ENCODE measurements at regions of chr5 and their contacts with region 1.

Region 1: DNA sequence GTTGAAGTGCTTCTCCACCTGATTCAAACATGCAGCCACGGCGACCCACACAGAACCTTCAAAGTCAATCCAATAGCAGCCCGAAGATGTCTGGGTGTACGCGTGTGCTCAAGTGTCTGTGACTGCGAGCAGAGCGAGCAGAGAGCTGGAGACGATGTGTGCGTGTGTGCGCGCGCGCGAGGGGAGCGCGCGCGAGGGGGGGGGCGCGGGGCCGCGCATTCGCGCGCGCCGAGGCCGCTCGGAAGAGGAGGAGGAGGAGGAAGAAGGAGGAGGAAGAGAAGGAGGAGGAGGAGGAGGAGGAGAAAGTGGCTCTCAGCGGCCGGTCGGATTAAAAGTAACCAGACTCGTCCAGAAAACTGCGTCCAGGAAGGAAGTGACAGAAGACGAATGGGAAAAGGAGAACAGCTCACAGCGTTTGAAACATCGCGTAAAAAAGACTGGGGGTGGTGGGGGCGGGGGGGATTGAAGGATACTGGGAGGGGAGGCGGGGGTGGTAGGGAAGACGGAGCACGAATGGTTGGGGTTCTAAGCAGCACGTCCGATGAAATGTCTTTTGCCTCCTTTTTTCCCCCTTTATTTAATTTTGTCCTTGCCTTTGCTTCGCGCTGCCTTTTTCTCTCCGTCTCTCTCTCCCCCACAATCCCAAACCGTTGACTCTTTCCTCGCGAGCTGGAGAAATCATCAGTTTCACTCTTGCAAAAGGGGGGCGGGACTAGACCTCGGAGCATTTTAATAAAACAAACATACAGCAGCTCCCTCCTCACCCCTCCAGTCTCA is at the start of gene MEF2C:
- DNase-seq: no peak
- H3K4me3 Mint-ChIP-seq: peak within 1 kb of the TSS; percentile 87
- H3K27ac Mint-ChIP-seq: no peak within 1 kb of the TSS
- H3K4me1 Mint-ChIP-seq: peaks cover 21% of the 10 kb centered on the region
- H3K27me3 Mint-ChIP-seq: peaks cover 59% of the 10 kb centered on the region
- total RNA-seq, gene MEF2C: 0.44 and 0.47 TPM in 2 replicates

Region 2: DNA sequence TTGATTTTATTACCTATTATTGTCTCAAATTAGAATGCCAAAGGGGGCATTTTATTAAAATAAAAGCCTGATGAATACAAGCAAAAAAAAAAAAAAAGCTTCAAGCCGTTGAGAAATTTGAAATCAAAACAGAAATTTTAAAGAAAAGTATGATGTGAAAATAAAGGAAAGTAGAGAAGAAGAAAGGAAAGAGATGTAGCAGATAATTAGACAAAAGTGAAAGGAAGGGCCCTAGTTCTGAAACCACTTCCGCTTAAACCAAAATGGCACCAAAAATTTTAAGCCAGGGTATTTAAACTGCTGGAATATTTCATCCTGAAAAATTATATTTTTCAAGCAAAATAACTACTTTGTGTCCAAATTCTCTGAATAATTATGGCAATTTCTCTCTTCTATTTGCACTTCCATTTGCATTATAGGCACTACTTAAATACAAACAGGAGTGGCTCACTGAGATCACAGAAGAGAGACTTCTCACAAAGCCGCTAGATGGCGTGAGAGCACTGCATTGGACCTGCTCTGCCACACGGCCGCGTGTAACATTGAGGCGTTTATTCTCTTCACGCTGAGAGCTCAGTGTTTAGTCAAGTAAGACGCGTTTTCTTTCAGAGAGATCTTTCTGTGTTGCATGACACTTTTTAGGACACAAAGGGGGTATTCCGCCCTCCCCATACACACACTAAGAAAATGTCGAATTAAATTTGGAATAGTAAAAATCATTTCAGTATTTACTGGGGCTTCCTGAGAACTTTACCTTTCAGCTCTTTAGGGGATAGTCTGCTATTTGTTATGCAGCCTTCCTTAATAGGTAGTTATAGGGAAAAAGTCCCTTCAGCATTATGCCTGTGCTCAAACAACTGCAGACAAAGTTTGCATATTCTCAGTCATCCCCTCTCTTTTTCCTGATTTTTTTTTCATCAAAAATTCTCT is 1102.2 kb before region 1 on chr5:
- intact Hi-C with region 1: loop called (anchors 5 kb)
- DNase-seq: peak; percentile 64
- H3K4me3 Mint-ChIP-seq: no peak overlapping the region
- H3K27ac Mint-ChIP-seq: no peak overlapping the region
- H3K4me1 Mint-ChIP-seq: no peaks in the 10 kb centered on the region
- H3K27me3 Mint-ChIP-seq: peaks cover 10% of the 10 kb centered on the region

Region 3: GRCh38 chr5:87807783-87808182 is 1075.5 kb before region 1 on chr5:
- intact Hi-C with region 1: no loop called
- DNase-seq: no peak
- H3K4me3 Mint-ChIP-seq: no peak overlapping the region
- H3K27ac Mint-ChIP-seq: no peak overlapping the region
- H3K4me1 Mint-ChIP-seq: no peaks in the 10 kb centered on the region
- H3K27me3 Mint-ChIP-seq: no peaks in the 10 kb centered on the region

Region 4: DNA sequence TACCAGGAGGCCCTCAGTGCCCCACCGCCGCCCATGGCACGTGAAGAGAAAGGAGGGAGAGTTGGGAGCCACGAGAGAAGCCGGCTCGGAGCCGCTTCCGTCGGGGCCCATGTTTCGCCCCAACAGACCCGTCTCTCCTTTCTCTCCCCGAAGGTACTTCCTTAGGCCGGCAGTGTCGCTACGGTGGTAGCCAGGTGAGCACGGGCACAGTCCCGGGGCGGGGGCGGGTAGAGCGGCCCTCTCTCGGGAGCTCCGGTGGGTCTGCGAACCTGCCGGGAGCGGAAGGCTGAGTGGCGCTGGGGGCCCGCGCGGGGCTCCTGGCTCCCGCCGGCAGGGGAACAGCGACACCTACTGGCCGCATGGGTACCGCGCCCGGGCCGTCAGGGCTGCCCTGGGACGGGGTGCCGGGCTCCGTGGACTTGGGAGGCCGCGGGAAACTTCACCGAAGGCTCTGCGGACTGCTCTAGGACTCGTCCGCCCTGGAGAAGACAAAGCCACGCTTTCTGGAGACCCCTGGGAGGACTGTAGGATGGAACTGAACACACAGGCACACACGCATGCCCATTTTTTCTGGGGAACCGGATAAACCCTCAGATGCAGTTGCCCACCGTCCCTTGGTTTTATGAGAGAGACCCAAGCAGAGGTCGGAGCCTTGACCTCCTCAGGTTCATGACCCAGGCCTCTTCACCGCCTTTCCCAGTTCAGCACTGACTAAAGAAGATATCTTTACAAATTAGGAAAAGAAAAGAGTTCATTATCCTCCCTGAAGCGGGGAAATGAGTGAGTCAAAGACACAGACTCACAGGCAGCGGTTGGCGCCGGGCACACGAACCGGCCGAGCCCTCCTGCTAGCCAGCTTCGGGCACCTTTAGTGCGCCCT is 202.8 kb before region 1 on chr5:
- intact Hi-C with region 1: loop called (anchors 5 kb)
- DNase-seq: peak; percentile 71
- H3K4me3 Mint-ChIP-seq: peak overlapping the region; percentile 26
- H3K27ac Mint-ChIP-seq: no peak overlapping the region
- H3K4me1 Mint-ChIP-seq: peaks cover 31% of the 10 kb centered on the region
- H3K27me3 Mint-ChIP-seq: peaks cover 81% of the 10 kb centered on the region

Region 5: DNA sequence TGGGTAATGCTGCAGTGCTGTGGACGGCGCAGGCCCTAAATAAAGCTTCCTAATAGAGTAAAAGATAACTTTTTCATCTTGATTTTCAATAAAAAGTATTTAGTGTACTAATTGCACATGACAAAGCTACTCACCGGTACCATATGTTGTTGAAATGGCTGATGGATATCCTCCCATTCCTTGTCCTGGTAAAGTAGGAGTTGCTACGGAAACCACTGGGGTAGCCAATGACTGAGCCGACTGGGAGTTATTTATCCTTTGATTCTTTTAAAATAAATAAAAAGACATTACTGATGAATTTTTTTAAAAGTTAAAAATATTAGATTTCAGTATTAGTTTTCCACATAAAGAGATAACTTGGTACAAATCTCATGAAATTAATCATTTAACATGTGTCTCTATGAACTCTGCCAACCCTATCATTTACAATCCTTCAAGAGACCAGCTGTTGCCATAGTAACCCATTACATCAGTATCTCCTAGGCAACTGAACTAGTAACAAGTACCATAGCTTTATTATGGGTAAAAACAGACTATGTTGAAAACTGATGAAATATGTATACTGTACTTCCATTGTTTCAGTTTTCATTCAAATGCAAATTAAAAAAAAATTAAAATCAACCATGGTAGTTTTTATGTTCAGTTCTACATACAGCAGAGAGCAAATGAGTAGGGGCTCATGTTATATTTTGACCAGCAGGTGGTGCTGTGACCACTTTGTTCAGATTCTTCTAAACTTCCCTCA is 154.0 kb before region 1 on chr5:
- intact Hi-C with region 1: loop called (anchors 2 kb)
- DNase-seq: peak; percentile 14
- H3K4me3 Mint-ChIP-seq: no peak overlapping the region
- H3K27ac Mint-ChIP-seq: no peak overlapping the region
- H3K4me1 Mint-ChIP-seq: peaks cover 4% of the 10 kb centered on the region
- H3K27me3 Mint-ChIP-seq: peaks cover 9% of the 10 kb centered on the region

Region 6: DNA sequence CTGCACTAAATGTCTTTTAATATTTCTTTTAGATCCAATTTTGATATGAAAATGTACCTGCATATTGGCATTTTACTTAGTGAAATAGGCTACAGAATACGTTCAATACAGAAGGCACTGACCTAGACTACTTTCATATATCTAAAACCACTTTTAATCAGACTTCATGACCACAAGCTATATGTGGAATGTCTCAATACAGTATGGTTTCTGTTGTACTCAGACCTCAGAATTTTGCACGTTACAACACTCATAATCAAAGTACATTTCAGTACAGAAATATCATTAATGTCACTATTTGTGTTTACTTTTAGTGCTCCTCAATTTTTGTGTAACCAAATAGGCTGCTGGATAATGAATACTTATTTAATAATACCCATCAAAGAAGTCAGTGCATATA is 75.1 kb before region 1 on chr5:
- intact Hi-C with region 1: no loop called
- DNase-seq: no peak
- H3K4me3 Mint-ChIP-seq: no peak overlapping the region
- H3K27ac Mint-ChIP-seq: no peak overlapping the region
- H3K4me1 Mint-ChIP-seq: no peaks in the 10 kb centered on the region
- H3K27me3 Mint-ChIP-seq: peaks cover 2% of the 10 kb centered on the region

Region 7: GRCh38 chr5:90558344-90559192 is 1675.3 kb after region 1 on chr5 and contains the start of gene ADGRV1:
- intact Hi-C with region 1: loop called (anchors 10 kb)
- DNase-seq: no peak
- H3K4me3 Mint-ChIP-seq: peak within 1 kb of the TSS; percentile 34
- H3K27ac Mint-ChIP-seq: no peak within 1 kb of the TSS
- H3K4me1 Mint-ChIP-seq: peaks cover 6% of the 10 kb centered on the region
- H3K27me3 Mint-ChIP-seq: peaks cover 70% of the 10 kb centered on the region
- total RNA-seq, gene ADGRV1: 0.05 TPM in 2 replicates